ENCODE measurements at regions of chr1 and their contacts with region 1.

Region 1: DNA sequence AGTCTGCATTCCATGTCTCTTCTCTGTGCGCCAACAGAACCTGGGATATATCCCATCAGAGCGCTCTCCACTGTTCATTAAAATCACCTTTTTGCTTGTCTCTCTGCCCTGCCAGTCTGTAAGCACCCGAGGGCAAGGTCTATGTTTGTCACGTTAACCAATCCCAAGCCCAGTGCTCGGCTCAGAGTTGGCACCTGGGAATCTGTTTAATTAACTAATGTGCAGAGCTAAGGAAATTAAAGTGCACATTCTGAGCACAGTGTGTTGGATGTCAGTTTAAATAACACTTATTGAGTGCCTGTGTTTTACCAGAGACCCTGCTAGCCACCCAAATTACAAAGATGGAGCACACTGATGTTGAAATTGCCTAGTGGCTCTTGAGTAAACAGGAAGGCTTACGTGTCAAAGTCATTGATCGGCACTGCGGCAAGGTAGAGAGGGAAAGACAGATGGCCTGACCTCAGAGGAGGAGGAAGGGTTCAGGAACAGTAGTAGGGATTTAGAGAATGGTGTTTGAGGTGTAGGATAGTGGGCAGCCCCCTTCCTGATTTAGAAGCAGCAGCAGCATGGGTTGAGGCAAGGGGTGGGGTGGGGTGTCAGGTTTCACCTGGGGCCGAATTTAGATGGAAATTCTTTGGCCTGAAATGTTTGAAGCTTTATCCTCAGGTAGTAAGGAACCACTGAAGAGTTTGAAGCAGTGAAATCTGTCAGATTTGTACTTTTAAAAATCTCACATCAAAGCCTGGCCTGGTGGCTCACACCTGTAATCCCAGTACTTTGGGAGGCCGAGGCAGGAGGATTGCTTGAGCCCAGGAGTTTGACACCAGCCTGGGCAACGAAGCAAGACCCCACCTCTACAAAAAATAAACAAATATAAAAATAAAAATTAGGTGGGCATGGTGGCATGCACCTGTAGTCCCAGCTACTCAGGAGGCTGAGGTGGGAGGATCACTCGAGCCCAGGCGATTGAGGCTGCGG is 7.7 kb downstream of the ARMH1 start:
- DNase-seq: no peak
- H3K4me3 ChIP-seq: no peak overlapping the region
- H3K27ac ChIP-seq: no peak overlapping the region
- H3K4me1 ChIP-seq: no peaks in the 10 kb centered on the region
- H3K27me3 ChIP-seq: no peaks in the 10 kb centered on the region
- CTCF ChIP-seq: no peak

Region 2: DNA sequence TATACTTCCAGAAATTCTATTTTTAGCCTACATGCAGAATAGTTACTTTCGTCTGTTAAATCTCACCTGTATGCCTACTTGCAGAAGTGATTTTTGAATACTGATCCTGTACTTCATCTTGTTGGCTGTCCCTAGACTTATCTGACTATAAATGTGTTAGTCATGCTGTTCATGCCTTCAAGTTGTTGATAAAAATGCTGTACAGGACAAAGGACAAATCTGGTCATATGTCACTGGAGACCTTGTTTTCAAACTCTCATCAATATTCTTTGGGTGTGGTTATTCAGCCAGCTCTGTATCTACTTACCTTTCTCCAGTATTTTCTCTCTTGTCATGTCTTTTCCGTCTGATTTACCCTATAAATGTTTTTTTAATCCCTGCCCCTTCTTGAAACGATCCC is 144.2 kb before region 1 on chr1:
- CTCF ChIA-PET with region 1: no interaction called
- POLR2A ChIA-PET with region 1: interaction called, 11 read pairs
- intact Hi-C with region 1: no loop called
- DNase-seq: no peak
- H3K4me3 ChIP-seq: no peak overlapping the region
- H3K27ac ChIP-seq: no peak overlapping the region
- H3K4me1 ChIP-seq: no peaks in the 10 kb centered on the region
- H3K27me3 ChIP-seq: no peaks in the 10 kb centered on the region
- CTCF ChIP-seq: no peak

Region 3: DNA sequence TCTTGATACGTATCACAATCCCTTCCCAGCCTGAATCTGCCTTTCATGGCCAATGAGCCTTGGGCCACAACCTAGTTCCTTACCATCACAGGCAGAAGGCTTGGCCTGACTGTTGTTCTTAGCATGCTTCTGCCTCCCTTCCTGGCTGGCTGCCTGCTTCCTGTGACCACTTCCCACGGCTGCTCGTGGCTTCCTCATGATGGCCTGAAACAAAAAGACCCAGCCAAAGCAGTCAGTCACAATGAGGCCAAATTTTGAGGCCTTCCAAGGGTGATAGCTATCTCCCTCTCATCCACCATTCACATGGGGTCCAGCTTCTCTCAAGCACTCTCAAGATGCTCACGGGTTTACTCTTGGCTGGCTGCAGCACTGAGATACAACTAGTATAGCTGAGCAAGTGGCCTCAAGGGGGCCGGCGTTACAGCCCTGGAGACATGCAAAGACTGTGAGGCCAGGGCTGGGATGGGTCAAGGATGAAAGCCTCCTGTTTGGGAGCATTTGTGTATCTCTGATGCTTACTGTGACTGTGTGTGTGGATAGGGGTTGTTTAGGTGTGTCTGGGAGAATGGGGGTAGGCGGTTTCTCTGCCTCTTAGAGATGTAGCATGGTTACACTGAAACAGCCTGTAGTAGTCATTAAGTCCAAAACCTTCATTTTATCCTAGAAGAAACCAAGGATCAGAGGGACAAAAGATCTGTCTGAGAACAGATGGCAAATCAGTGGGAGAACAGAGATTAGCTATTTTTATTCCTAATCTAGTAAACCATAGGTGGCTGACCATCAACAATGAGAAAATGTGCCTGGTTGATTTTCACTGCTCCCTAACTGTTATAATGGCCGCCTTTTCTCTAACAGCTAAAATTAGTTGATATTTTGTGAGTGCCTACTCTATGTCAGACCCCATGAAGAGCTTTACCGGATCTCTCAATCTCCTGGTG is 652.4 kb after region 1 on chr1:
- CTCF ChIA-PET with region 1: no interaction called
- POLR2A ChIA-PET with region 1: no interaction called
- intact Hi-C with region 1: no loop called
- DNase-seq: no peak
- H3K4me3 ChIP-seq: no peak overlapping the region
- H3K27ac ChIP-seq: no peak overlapping the region
- H3K4me1 ChIP-seq: no peaks in the 10 kb centered on the region
- H3K27me3 ChIP-seq: no peaks in the 10 kb centered on the region
- CTCF ChIP-seq: no peak

Measured in A673 (cell line).